Activated B cell treated with CpG ODN at 0.5 μM for 24 hours (primary cell): ENCODE measurements at regions of chr10 and their contacts with region 1.

Region 1: DNA sequence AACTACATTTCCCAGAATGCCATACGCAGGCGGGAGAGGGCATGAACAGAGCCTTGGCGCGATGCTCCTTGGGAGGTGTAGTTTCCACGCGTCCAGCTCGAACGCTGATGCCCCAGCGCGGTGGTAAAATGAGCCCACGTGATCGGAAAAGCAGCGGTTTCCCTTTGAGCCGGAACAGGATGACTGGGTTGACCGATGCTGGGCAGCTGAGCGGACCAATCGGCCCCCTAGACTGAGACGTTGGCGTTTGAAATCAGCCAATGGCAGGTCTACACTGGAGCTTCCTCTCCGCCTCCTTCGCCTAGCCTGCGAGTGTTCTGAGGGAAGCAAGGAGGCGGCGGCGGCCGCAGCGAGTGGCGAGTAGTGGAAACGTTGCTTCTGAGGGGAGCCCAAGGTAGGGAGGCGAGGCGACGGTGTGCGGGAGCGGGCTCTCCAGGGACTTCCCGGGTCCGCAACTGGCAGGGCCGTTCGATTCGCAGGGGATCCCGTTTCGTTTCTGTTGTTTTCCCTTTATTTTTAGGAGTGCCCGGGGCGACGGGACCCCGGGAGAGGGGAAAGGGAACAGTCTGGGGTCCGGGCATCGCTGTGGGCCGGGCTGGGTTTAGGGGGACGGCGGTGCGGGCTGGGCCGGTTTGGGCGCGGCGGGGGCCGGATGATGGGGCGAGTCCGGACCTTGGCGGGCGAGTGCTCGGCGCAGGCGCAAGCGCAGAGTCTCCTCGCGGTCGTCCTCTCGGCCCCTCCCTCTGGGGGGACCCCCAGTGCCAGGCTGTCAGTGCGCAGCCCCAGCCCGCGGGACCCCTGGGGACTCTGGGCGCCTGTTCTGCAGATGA is at the start of gene BUB3:
- DNase-seq: peak; percentile 80
- ATAC-seq: peak; percentile 91
- H3K4me3 Mint-ChIP-seq: peak within 1 kb of the TSS; percentile 100
- H3K27ac Mint-ChIP-seq: peak within 1 kb of the TSS; percentile 99
- H3K4me1 Mint-ChIP-seq: peaks cover 73% of the 10 kb centered on the region
- H3K27me3 Mint-ChIP-seq: peaks cover 13% of the 10 kb centered on the region
- CTCF ChIP-seq: no peak
- total RNA-seq, gene BUB3: 137 and 141 TPM in 2 replicates

Region 2: DNA sequence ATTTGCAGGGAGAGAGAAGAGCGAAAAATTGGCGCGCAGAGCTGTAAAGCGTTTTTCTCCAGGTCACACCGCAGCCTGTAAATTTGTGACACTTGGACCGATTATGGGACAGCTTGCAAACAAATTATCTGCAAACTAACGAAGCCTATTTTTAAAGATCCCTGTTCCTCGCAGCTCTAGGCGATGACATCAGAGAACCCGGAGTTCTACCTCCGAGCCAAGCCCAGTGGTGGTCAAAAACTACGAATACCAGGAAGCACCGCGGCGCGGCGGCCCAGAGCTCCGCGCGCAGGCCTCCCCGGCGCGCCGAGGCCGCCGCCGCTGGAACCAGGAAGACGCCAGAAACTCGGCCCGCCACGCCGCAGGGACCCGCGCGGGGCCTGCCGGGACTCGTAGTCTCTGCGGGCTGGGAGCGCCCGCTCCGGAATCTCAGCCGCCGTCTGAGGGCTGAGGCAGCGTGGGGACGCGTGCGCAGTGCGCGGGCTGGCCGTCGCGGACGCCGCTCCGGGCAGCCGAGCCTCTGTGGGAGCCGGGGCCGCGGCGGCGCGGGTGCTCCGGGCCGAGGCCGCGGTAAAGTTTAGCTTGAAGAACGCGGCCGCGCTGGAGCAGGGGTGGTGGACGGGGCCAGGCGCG is 780.0 kb before region 1 on chr10 and contains the start of gene PLEKHA1:
- CTCF ChIA-PET with region 1: no interaction called
- POLR2A ChIA-PET with region 1: interaction called, 4 read pairs
- intact Hi-C with region 1: loop called (anchors 1 kb)
- DNase-seq: peak; percentile 90
- ATAC-seq: peak; percentile 89
- H3K4me3 Mint-ChIP-seq: peak within 1 kb of the TSS; percentile 93
- H3K27ac Mint-ChIP-seq: peak within 1 kb of the TSS; percentile 95
- H3K4me1 Mint-ChIP-seq: peaks cover 30% of the 10 kb centered on the region
- H3K27me3 Mint-ChIP-seq: peaks cover 23% of the 10 kb centered on the region
- CTCF ChIP-seq: no peak
- total RNA-seq, gene PLEKHA1: 11.8 and 12.8 TPM in 2 replicates

Region 3: GRCh38 chr10:122980209-122981065 is 173.9 kb before region 1 on chr10 and contains the start of gene PSTK:
- CTCF ChIA-PET with region 1: no interaction called
- POLR2A ChIA-PET with region 1: interaction called, 8 read pairs
- intact Hi-C with region 1: loop called (anchors 1 kb)
- DNase-seq: peak; percentile 84
- ATAC-seq: peak; percentile 96
- H3K4me3 Mint-ChIP-seq: peak within 1 kb of the TSS; percentile 93
- H3K27ac Mint-ChIP-seq: peak within 1 kb of the TSS; percentile 96
- H3K4me1 Mint-ChIP-seq: peaks cover 18% of the 10 kb centered on the region
- H3K27me3 Mint-ChIP-seq: peaks cover 7% of the 10 kb centered on the region
- CTCF ChIP-seq: no peak
- total RNA-seq, gene PSTK: 3.9 and 5.3 TPM in 2 replicates

Region 4: GRCh38 chr10:123241391-123242141 is 87.3 kb after region 1 on chr10:
- CTCF ChIA-PET with region 1: no interaction called
- POLR2A ChIA-PET with region 1: interaction called, 3 read pairs
- intact Hi-C with region 1: loop called (anchors 1 kb)
- DNase-seq: no peak
- ATAC-seq: peak; percentile 88
- H3K4me3 Mint-ChIP-seq: no peak overlapping the region
- H3K27ac Mint-ChIP-seq: peak overlapping the region; percentile 66
- H3K4me1 Mint-ChIP-seq: peaks cover 12% of the 10 kb centered on the region
- H3K27me3 Mint-ChIP-seq: no peaks in the 10 kb centered on the region
- CTCF ChIP-seq: no peak

Region 5: GRCh38 chr10:123885406-123886170 is 731.3 kb after region 1 on chr10:
- CTCF ChIA-PET with region 1: no interaction called
- POLR2A ChIA-PET with region 1: no interaction called
- intact Hi-C with region 1: no loop called
- DNase-seq: no peak
- ATAC-seq: no peak
- H3K4me3 Mint-ChIP-seq: no peak overlapping the region
- H3K27ac Mint-ChIP-seq: no peak overlapping the region
- H3K4me1 Mint-ChIP-seq: no peaks in the 10 kb centered on the region
- H3K27me3 Mint-ChIP-seq: peaks cover 21% of the 10 kb centered on the region
- CTCF ChIP-seq: no peak

Region 6: DNA sequence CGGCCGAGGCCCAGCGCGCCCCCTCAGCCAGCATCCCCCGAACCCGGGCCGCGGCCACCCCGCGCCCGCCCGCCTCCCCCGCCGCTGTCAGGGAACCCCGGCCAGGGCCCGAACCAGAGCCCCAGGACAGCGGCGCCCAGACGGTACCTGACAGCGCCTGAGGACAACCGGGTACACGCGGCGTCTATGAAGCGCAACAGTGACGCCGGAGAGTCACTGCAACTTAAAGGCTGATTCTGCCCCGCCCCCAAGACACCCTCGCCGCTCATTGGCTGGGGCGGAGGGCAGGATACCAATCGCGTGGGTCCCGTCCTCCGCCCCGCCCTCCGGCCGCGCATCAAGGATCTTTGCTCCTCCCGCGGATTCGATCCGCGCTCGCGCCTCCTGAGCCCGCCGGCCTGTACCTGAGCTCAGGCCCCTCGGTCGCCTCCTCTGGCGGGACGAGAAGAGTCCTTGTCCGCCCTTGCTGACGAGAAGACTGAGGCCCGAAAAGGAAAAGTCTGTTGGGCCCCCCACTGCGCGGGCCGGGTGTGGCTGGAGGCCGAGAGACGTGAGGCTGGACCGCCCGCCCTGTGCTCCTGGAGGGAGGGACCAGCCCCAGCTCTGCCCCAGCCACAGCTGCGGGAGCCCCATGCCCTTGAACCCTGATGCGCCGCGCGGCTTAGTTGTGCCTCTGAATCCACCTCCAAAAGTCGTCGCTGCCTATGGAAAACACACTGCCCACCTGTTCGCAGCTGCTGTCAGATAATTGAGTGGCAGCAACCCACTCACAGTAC is 1264.6 kb after region 1 on chr10 and contains the start of gene OAT:
- CTCF ChIA-PET with region 1: no interaction called
- POLR2A ChIA-PET with region 1: no interaction called
- intact Hi-C with region 1: loop called (anchors 5 kb)
- DNase-seq: peak; percentile 92
- ATAC-seq: peak; percentile 97
- H3K4me3 Mint-ChIP-seq: peak within 1 kb of the TSS; percentile 82
- H3K27ac Mint-ChIP-seq: peak within 1 kb of the TSS; percentile 46
- H3K4me1 Mint-ChIP-seq: peaks cover 12% of the 10 kb centered on the region
- H3K27me3 Mint-ChIP-seq: peaks cover 19% of the 10 kb centered on the region
- CTCF ChIP-seq: no peak
- total RNA-seq, gene OAT: 19.6 and 20.1 TPM in 2 replicates

Region 7: DNA sequence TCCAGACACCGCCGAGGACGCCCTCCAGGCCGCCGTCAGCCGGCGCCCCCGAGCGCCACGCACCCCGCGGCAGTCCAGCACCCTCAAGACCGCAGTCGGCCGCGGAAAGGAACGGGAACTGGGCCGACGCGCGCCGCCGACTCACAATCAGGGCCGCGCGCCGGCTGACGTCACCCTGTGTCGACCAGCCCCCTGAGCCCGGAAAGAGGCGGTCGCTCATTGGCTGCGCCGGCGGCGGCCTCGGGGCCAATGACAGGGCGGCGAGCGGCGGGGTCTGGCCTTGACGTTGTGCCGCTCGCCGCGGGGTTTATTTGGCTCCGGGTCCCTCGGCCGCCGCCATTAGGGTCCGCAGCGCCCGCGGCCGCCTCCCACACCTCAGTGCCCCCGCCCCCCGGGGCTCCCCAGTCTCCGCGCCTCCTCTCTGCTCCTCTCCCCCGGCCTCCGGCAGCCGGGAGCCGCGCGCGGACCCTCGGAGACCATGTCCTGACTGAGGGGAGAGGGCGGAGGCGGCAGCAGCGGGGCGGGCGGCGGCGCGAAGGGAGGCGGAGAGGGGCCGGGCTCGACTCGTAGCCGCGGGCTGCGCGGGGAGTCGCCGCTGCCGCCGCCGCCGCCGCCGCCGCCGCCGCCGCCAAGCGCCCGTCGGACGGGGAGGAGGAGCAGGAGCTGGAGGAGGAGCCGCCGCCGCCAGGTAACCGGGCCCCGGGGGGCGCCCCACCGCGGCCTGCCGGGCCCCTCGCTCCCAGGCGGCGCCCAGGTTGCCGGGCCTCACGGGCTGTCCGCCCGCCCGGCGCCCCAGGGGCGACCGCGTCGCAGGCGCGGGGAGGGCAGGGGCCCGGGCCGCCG is 1762.5 kb after region 1 on chr10:
- CTCF ChIA-PET with region 1: no interaction called
- POLR2A ChIA-PET with region 1: no interaction called
- intact Hi-C with region 1: loop called (anchors 5 kb)
- DNase-seq: peak; percentile 98
- ATAC-seq: peak; percentile 92
- H3K4me3 Mint-ChIP-seq: peak overlapping the region; percentile 84
- H3K27ac Mint-ChIP-seq: peak overlapping the region; percentile 90
- H3K4me1 Mint-ChIP-seq: peaks cover 37% of the 10 kb centered on the region
- H3K27me3 Mint-ChIP-seq: peaks cover 2% of the 10 kb centered on the region
- CTCF ChIP-seq: no peak